ENCODE measurements at regions of chr18 and their contacts with region 1.

Region 1: GRCh38 chr18:43539862-43540261 is 262.6 kb upstream of the SYT4 start:
- DNase-seq: no peak
- H3K4me3 ChIP-seq: no peak overlapping the region
- H3K27ac ChIP-seq: no peak overlapping the region
- H3K4me1 ChIP-seq: no peaks in the 10 kb centered on the region
- H3K27me3 ChIP-seq: no peaks in the 10 kb centered on the region
- CTCF ChIP-seq: no peak
- EP300 ChIP-seq: no peak
- POLR2A ChIP-seq: no peak

Region 2: GRCh38 chr18:42813570-42813969 is 726.3 kb before region 1 on chr18:
- intact Hi-C with region 1: no loop called
- DNase-seq: no peak
- H3K4me3 ChIP-seq: no peak overlapping the region
- H3K27ac ChIP-seq: no peak overlapping the region
- H3K4me1 ChIP-seq: no peaks in the 10 kb centered on the region
- H3K27me3 ChIP-seq: no peaks in the 10 kb centered on the region
- CTCF ChIP-seq: no peak
- EP300 ChIP-seq: no peak
- POLR2A ChIP-seq: no peak

Region 3: GRCh38 chr18:43192408-43192807 is 347.5 kb before region 1 on chr18:
- intact Hi-C with region 1: no loop called
- DNase-seq: no peak
- H3K4me3 ChIP-seq: no peak overlapping the region
- H3K27ac ChIP-seq: no peak overlapping the region
- H3K4me1 ChIP-seq: no peaks in the 10 kb centered on the region
- H3K27me3 ChIP-seq: no peaks in the 10 kb centered on the region
- CTCF ChIP-seq: no peak
- EP300 ChIP-seq: no peak
- POLR2A ChIP-seq: no peak

Region 4: DNA sequence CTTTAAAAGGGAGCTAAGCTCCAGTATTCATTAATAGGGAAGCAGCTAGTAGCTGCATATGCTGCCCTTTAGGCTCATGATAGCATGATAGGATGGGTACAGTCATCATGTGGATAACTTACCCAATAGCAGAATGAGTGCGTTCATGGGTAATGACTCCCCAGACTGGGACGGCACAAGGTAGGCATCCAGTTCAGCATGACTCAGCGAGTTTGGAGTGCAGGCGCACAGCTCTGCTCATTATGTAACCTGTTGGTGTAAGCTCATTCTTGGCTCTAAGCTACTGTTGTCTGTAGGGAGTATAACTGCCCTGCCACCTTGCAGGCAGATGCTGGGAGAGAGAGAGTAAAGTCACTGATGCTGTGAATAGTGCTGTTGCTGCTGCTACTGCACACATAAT is 53.4 kb before region 1 on chr18:
- intact Hi-C with region 1: loop called (anchors 10 kb)
- DNase-seq: peak in 1 of 2 donors; percentile 37
- H3K4me3 ChIP-seq: no peak overlapping the region
- H3K27ac ChIP-seq: peak overlapping the region in 3 of 5 donors; percentile 28 to 67 (median 33)
- H3K4me1 ChIP-seq: peaks cover 4 to 23% (median 17%) of the 10 kb centered on the region in 4 donors
- H3K27me3 ChIP-seq: no peaks in the 10 kb centered on the region
- CTCF ChIP-seq: no peak
- EP300 ChIP-seq: no peak
- POLR2A ChIP-seq: no peak

Region 5: DNA sequence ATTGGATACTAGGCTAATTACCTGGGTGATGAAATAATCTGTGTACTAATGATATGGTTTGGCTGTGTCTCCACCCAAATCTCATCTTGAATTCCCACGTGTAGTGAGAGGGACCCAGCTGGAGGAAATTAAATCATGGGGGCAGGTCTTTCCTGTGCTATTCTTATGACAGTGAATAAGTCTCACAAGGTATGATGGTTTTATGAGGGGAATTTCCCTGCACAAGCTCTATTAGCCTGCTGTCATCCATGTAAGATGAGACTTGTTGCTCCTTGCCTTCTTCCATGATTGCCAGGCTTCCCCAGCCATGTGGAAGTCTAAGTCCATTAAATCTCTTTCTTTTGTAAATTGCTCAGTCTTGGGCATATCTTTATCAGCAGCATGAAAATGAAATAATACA is 131.6 kb after region 1 on chr18:
- intact Hi-C with region 1: no loop called
- DNase-seq: no peak
- H3K4me3 ChIP-seq: no peak overlapping the region
- H3K27ac ChIP-seq: no peak overlapping the region
- H3K4me1 ChIP-seq: no peaks in the 10 kb centered on the region
- H3K27me3 ChIP-seq: no peaks in the 10 kb centered on the region
- CTCF ChIP-seq: no peak
- EP300 ChIP-seq: no peak
- POLR2A ChIP-seq: no peak

Measured in stomach (tissue), 19 donors.